WTC11 (cell line): ENCODE measurements at regions of chr7 and their contacts with region 1.

Region 1: GRCh38 chr7:141262101-141263090 is 188.5 kb downstream of the TMEM178B start:
- DNase-seq: no peak
- ATAC-seq: no peak; the same call in 1 of the 2 replicates
- H3K4me3 Mint-ChIP-seq: no peak overlapping the region
- H3K27ac Mint-ChIP-seq: no peak overlapping the region
- H3K4me1 Mint-ChIP-seq: peaks cover 5% of the 10 kb centered on the region
- H3K27me3 Mint-ChIP-seq: no peaks in the 10 kb centered on the region
- CTCF ChIP-seq: 0 out of 2 replicates have a peak, but pooled peaks have one; percentile 35

Region 2: DNA sequence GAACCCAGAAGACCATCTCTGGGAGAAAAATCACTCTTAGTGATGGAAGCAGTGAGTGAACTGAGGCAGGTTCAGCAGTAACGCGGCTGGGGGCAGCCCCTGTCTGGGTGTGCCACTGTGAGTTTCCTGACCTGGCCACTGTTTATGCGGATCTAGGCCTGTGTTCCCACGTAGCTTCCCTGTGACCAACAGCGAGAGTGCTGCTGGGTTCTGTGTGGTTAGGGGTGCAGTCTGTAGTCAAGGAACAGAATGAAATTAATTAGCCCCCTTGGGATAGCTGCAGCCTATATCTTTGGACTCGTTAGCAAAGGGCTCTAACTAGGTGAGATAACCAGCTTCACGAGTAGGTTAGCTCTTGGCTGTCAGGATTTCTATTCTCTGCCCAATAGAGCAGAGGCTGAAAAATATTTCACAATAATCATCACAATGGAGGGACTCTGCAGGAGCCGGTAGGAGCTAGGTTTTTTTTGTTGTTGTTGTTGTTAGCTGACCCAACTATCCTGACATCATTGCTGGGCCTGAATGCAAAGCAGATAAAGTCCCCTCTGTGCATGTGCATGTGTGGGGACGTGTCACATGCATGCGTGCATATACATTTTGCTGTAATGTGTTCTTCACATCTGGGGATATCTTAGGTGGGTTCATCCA is 23.7 kb before region 1 on chr7:
- CTCF ChIA-PET with region 1: interaction called, 11 read pairs
- POLR2A ChIA-PET with region 1: no interaction called
- DNase-seq: no peak
- ATAC-seq: peak; percentile 67
- H3K4me3 Mint-ChIP-seq: no peak overlapping the region
- H3K27ac Mint-ChIP-seq: peak overlapping the region; percentile 24; the same call in 1 of the 2 replicates
- H3K4me1 Mint-ChIP-seq: peaks cover 42% of the 10 kb centered on the region
- H3K27me3 Mint-ChIP-seq: no peaks in the 10 kb centered on the region
- CTCF ChIP-seq: no peak

Region 3: GRCh38 chr7:141251957-141252356 is 10.4 kb before region 1 on chr7:
- CTCF ChIA-PET with region 1: interaction called, 10 read pairs
- POLR2A ChIA-PET with region 1: no interaction called
- DNase-seq: no peak
- ATAC-seq: peak; percentile 43; the same call in 1 of the 2 replicates
- H3K4me3 Mint-ChIP-seq: no peak overlapping the region
- H3K27ac Mint-ChIP-seq: no peak overlapping the region
- H3K4me1 Mint-ChIP-seq: peaks cover 10% of the 10 kb centered on the region
- H3K27me3 Mint-ChIP-seq: no peaks in the 10 kb centered on the region
- CTCF ChIP-seq: no peak